Keratinocyte (primary cell): ENCODE measurements at regions of chr10 and their contacts with region 1.

Region 1: GRCh38 chr10:84139126-84140035 is at the start of gene GHITM:
- DNase-seq: peak; percentile 83
- H3K4me3 ChIP-seq: peak within 1 kb of the TSS; percentile 73 to 99 (median 96)
- H3K27ac ChIP-seq: peak within 1 kb of the TSS; percentile 86
- H3K4me1 ChIP-seq: peaks cover 13% of the 10 kb centered on the region
- H3K27me3 ChIP-seq: no peaks in the 10 kb centered on the region
- CTCF ChIP-seq: peak; percentile 3 to 46 (median 24)
- polyA plus RNA-seq, gene GHITM: 146 to 214 TPM (median 175 TPM) in 3 replicates

Region 2: DNA sequence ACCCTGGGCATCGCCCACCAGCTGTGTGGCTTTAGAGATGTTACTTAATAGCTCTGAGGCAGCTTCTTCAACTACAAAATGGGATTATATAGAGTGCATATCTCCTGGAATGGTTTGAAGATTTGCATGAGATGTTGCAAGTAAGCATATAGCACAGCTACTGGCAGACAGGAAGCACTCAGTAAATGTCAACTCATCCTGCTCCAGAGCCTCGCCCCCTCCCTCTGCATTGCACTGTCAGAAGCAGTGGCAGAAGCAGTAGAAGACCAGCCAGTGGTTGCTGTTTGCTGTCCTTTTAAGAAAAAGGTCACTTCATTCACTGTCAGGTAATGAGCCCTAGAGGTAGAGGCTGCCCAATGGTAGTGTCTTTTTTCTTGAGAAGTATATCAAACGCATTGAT is 180.1 kb before region 1 on chr10:
- dilution Hi-C with region 1: no loop called
- DNase-seq: no peak
- H3K4me3 ChIP-seq: no peak overlapping the region
- H3K27ac ChIP-seq: no peak overlapping the region
- H3K4me1 ChIP-seq: no peaks in the 10 kb centered on the region
- H3K27me3 ChIP-seq: no peaks in the 10 kb centered on the region
- CTCF ChIP-seq: no peak

Region 3: GRCh38 chr10:84205049-84205852 is 65.9 kb after region 1 on chr10:
- dilution Hi-C with region 1: loop called (anchors 10 kb)
- DNase-seq: no peak
- H3K4me3 ChIP-seq: no peak overlapping the region
- H3K27ac ChIP-seq: no peak overlapping the region
- H3K4me1 ChIP-seq: no peaks in the 10 kb centered on the region
- H3K27me3 ChIP-seq: peaks cover 4% of the 10 kb centered on the region
- CTCF ChIP-seq: peak; percentile 98 to 99 (median 98)

Region 4: DNA sequence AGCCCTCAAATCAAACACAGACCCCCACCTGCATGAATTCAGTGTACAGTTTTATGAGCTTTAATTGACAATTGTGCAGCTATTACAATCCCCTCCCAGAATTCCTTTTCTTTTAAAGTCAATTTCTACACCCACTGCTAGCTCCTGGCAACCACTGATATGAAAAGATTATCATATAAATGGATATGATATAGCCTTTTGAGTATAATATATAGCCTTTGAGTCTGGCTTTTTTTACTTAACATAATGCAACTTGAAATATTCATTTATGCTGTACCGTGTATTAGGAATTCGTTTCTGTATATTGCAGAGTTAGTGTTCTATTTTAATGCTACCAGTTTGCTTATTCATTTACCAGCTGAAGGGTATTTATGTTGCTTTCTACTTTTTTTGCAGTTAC is 316.7 kb after region 1 on chr10:
- dilution Hi-C with region 1: no loop called
- DNase-seq: no peak
- H3K4me3 ChIP-seq: no peak overlapping the region
- H3K27ac ChIP-seq: no peak overlapping the region
- H3K4me1 ChIP-seq: no peaks in the 10 kb centered on the region
- H3K27me3 ChIP-seq: no peaks in the 10 kb centered on the region
- CTCF ChIP-seq: no peak